ENCODE measurements at regions of chr18 and their contacts with region 1.

Region 1: DNA sequence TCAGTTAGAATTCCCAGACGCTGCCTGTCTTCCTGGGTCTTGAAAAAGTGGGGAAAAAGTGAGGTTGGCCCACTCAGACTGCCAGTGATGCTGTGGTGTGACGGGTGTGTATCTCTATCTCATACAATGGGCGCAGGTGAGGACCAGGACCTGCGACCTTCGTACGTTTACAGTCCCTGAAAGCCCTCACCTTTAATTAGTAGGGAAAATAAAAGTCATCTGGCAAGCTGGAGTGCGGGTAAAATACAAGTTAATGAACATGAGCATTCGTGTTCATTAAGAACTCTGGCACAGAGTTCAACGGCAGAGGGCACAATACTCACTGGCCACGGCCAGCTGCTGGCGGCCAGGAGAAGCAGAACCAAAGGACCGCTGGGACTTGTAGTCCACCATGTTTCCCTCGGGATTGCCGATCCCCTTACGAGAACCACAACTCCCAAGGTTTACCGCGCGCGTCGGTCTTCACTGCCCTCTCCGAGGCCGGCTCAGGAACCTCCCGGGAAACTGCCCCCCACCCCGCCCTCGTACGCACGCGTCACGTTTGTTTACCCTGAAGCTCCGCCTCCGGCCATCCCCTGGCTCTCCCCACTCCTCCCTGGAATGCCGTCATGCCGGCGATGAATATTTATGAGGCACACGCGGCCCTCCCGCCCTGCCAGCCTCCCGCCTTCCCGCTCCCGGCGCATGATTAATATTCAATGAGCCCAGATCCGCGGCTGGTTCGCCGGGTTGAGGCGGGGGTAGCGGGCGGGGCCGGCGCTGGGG is 488 bp upstream of the PHLPP1 start:
- DNase-seq: peak; percentile 81 to 96
- ATAC-seq: peak; percentile 68 to 82 (median 71)
- H3K4me3 ChIP-seq: peak overlapping the region; percentile 86
- H3K4me3 Mint-ChIP-seq: peak overlapping the region; percentile 89
- H3K27ac ChIP-seq: peak overlapping the region; percentile 92
- H3K27ac Mint-ChIP-seq: peak overlapping the region; percentile 92 to 94
- H3K4me1 ChIP-seq: peaks cover 13% of the 10 kb centered on the region
- H3K4me1 Mint-ChIP-seq: peaks cover 29 to 31% of the 10 kb centered on the region in 2 donors
- H3K27me3 ChIP-seq: no peaks in the 10 kb centered on the region
- H3K27me3 Mint-ChIP-seq: no peaks in the 10 kb centered on the region
- CTCF ChIP-seq: peak; percentile 80

Region 2: GRCh38 chr18:62186774-62187542 is 527.9 kb before region 1 on chr18 and contains the starts of genes PIGN and RELCH:
- intact Hi-C with region 1: loop called (anchors 10 kb)
- DNase-seq: peak; percentile 85 to 98
- ATAC-seq: peak; percentile 90 to 99 (median 94)
- H3K4me3 ChIP-seq: peak within 1 kb of the TSS; percentile 95
- H3K4me3 Mint-ChIP-seq: peak within 1 kb of the TSS; percentile 100
- H3K27ac ChIP-seq: peak within 1 kb of the TSS; percentile 74
- H3K27ac Mint-ChIP-seq: peak within 1 kb of the TSS; percentile 96 to 98
- H3K4me1 ChIP-seq: peaks cover 20% of the 10 kb centered on the region
- H3K4me1 Mint-ChIP-seq: peaks cover 60 to 61% of the 10 kb centered on the region in 2 donors
- H3K27me3 ChIP-seq: no peaks in the 10 kb centered on the region
- H3K27me3 Mint-ChIP-seq: no peaks in the 10 kb centered on the region
- CTCF ChIP-seq: no peak
- total RNA-seq, gene PIGN: 12.2 to 21.7 (median 20.1) TPM
- total RNA-seq, gene RELCH: 60.1 to 69.9 (median 63.9) TPM

Region 3: GRCh38 chr18:62741118-62741566 is 26.3 kb after region 1 on chr18:
- intact Hi-C with region 1: no loop called
- DNase-seq: no peak
- ATAC-seq: no peak
- H3K4me3 ChIP-seq: no peak overlapping the region
- H3K4me3 Mint-ChIP-seq: no peak overlapping the region
- H3K27ac ChIP-seq: no peak overlapping the region
- H3K27ac Mint-ChIP-seq: no peak overlapping the region
- H3K4me1 ChIP-seq: no peaks in the 10 kb centered on the region
- H3K4me1 Mint-ChIP-seq: peaks cover 31 to 36% of the 10 kb centered on the region in 2 donors
- H3K27me3 ChIP-seq: no peaks in the 10 kb centered on the region
- H3K27me3 Mint-ChIP-seq: no peaks in the 10 kb centered on the region
- CTCF ChIP-seq: no peak

Region 4: GRCh38 chr18:62759704-62760402 is 45.0 kb after region 1 on chr18:
- intact Hi-C with region 1: no loop called
- DNase-seq: no peak
- ATAC-seq: no peak
- H3K4me3 ChIP-seq: no peak overlapping the region
- H3K4me3 Mint-ChIP-seq: no peak overlapping the region
- H3K27ac ChIP-seq: no peak overlapping the region
- H3K27ac Mint-ChIP-seq: no peak overlapping the region
- H3K4me1 ChIP-seq: no peaks in the 10 kb centered on the region
- H3K4me1 Mint-ChIP-seq: peaks cover 5 to 6% of the 10 kb centered on the region in 2 donors
- H3K27me3 ChIP-seq: no peaks in the 10 kb centered on the region
- H3K27me3 Mint-ChIP-seq: no peaks in the 10 kb centered on the region
- CTCF ChIP-seq: no peak

Region 5: DNA sequence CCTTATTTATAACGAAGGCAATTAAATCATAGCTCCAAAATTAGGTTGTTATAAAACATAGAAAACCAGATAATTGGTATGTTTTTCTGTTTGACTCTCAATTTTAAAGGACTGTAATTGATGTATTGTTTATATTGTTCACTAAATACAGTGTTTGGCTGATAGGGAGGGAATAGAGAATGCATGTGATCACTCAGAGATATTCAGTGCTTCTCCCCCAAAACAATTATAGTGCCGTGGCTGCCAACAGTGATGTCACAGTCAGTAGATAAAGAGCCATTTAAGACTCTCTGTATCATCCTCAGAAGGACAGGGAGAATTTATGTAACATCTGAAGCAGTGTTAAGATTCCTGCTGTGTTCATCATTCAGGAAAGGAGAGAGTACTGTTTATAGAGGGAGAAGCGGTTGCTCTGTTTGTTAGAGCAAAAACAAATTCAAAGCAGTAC is 70.1 kb after region 1 on chr18:
- intact Hi-C with region 1: loop called (anchors 5 kb)
- DNase-seq: no peak
- ATAC-seq: peak in 1 of 3 donors; percentile 24
- H3K4me3 ChIP-seq: no peak overlapping the region
- H3K4me3 Mint-ChIP-seq: no peak overlapping the region
- H3K27ac ChIP-seq: no peak overlapping the region
- H3K27ac Mint-ChIP-seq: peak overlapping the region; percentile 18 to 65
- H3K4me1 ChIP-seq: no peaks in the 10 kb centered on the region
- H3K4me1 Mint-ChIP-seq: peaks cover 32 to 35% of the 10 kb centered on the region in 2 donors
- H3K27me3 ChIP-seq: no peaks in the 10 kb centered on the region
- H3K27me3 Mint-ChIP-seq: no peaks in the 10 kb centered on the region
- CTCF ChIP-seq: no peak

Region 6: DNA sequence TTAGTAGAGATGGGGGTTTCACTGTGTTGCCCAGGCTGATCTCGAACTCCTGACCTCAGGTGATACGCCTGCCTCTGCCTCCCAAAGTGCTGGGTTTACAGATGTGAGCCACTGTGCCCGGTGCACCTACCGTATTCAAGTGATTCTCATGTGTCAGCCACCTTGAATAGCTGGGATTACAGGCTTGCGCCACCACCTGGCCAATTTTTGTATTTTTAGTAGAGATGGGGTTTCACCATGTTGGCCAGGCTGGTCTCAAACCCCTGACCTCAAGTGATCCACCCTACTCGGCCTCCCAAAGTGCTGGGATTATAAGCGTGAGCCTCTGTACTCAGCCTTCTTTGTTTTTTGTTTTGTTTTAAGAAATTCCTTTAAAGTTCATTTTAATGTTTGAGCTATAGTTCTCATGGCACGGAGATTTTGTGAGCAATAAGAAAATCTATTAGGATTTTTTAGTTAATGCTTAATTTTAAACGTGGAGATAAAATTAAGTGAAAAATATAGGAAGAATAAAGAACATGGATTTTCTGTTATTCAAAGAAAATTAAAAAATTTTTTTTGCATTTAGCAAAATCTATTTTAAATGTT is 243.1 kb after region 1 on chr18:
- intact Hi-C with region 1: loop called (anchors 1 kb)
- DNase-seq: peak; percentile 35 to 58
- ATAC-seq: peak in 2 of 3 donors; percentile 55 to 62
- H3K4me3 ChIP-seq: no peak overlapping the region
- H3K4me3 Mint-ChIP-seq: no peak overlapping the region
- H3K27ac ChIP-seq: no peak overlapping the region
- H3K27ac Mint-ChIP-seq: no peak overlapping the region
- H3K4me1 ChIP-seq: peaks cover 5% of the 10 kb centered on the region
- H3K4me1 Mint-ChIP-seq: peaks cover 20 to 23% of the 10 kb centered on the region in 2 donors
- H3K27me3 ChIP-seq: no peaks in the 10 kb centered on the region
- H3K27me3 Mint-ChIP-seq: no peaks in the 10 kb centered on the region
- CTCF ChIP-seq: peak; percentile 47

Region 7: DNA sequence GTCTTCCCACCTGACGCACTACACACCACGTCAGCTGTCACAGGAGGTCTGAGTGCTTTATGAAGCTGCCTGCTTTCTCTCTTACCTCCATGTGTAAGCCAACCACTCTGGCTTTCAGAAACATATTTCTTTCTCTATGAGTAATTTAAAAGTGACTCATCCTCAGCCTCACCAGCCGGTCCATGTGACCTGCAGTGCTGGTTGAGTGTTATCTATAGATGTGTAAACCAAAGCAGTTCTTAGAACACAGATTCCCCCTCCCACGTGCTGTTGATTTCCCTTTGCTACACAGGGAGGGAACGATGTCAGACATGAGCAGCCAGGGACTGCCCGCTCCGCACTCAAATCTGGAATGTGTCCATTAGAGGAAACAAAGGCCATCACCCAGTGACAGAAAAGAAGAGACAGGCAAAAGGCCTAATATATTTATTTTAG is 446.9 kb after region 1 on chr18:
- intact Hi-C with region 1: loop called (anchors 5 kb)
- DNase-seq: peak; percentile 70 to 92
- ATAC-seq: peak; percentile 83 to 90 (median 87)
- H3K4me3 ChIP-seq: no peak overlapping the region
- H3K4me3 Mint-ChIP-seq: peak overlapping the region; percentile 77
- H3K27ac ChIP-seq: peak overlapping the region; percentile 97
- H3K27ac Mint-ChIP-seq: peak overlapping the region; percentile 93 to 96
- H3K4me1 ChIP-seq: peaks cover 60% of the 10 kb centered on the region
- H3K4me1 Mint-ChIP-seq: peaks cover 57 to 61% of the 10 kb centered on the region in 2 donors
- H3K27me3 ChIP-seq: no peaks in the 10 kb centered on the region
- H3K27me3 Mint-ChIP-seq: no peaks in the 10 kb centered on the region
- CTCF ChIP-seq: no peak